ENCODE measurements at regions of chr5 and their contacts with region 1.

Region 1: DNA sequence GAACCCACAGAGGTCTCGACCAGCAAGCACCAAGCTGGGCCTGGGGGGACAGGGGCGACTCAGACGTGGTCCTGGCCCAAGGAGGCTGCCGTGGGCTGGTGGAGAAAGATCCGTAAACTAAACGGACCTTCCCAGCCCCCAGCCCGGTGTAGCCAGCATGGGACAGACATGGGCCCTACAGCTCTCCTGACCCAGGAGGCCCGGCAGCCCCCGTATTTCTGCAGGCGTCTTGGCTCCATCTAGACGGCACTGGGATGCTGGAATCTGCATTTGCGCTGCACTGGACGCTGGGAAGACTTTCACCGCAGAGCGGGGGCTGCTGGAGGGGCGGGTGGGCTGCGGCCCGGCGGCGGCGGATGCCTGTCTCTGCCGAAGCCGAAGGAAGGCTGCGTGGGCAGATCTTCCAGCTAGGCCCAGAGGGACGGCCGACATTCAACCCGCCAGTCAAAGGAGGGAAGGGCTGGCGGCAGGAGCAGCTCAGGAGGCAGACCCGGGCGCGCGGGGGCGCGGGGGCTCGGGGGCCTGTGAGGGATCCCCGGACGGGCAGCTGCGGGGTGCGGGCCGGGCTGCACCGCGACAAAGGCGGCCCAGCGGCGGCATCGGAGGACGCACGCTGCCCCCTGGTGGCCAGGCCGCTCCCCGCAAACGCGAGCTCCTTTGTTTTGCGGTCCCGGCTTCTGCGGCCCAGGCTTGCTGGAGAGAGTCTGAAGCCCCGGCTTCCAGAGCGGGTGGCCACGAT is 266.2 kb downstream of the NSG2 start:
- DNase-seq: peak; percentile 16
- H3K4me3 ChIP-seq: peak overlapping the region; percentile 9
- CTCF ChIP-seq: peak; percentile 65

Region 2: DNA sequence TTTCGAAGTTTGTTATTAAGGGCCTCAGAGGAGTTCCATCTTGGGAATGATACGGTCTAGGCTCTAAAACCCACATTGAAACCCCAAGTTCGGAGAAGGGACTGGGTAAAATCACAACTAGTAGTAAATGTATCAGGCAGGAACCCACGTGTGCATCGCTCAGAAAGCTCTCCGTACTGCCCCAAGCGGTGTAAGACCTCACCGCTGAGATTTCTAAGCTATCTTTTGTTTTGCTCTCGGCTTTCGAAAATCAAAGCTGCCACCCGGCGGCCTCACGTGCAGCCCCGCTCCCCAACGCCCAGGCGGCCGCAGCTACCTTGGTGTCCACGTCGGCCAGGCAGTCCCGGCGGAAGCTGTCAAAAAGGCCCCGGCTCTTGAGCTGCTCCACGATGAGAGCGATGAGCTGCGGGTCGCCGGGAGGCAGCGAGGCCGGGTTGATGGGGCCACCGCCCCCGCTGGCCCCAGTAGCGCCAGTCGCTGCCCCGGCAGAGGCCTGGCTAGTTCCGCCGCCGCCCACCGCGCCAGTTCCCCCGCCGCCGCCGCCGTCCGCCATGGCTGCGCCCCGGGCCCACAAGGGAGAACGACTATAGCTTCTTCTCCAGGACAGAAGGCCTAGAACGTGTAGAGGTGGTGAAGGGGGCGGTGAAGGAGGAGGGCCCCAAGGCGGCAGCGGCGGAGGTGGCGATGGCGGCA is 695.7 kb before region 1 on chr5:
- in situ Hi-C with region 1: loop called (anchors 25 kb)
- DNase-seq: peak; percentile 55
- H3K4me3 ChIP-seq: peak overlapping the region; percentile 89
- CTCF ChIP-seq: peak; percentile 75

Region 3: DNA sequence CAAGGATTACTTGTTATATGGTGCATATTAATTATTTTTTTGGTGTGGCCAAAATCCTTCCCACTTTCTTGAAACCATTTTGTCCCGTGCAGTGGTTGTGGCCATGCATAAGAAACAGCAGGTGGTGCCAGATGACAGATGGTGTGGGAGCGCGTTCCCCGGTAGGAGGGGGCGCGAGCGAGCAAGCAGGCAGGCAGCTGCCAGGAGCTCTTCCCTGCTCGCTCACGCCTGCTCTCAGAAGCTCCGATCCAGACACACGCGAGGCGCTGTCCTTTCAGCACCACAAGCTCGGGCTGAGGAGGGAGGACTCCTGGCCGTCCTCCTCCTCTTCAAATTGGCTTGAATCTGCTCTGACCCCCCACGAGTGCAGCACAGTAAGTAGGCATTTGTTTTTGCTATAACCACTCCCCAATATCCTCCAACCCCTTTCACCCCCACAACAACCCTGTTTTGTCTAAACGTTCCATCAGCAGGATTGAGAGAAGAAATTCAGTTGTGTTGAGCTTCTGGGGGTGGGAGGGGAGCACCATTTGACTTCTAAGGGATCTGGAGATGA is 266.2 kb before region 1 on chr5 and contains the start of gene NSG2:
- in situ Hi-C with region 1: loop called (anchors 25 kb)
- DNase-seq: peak; percentile 94
- H3K4me3 ChIP-seq: no peak within 1 kb of the TSS
- CTCF ChIP-seq: peak; percentile 93

Region 4: DNA sequence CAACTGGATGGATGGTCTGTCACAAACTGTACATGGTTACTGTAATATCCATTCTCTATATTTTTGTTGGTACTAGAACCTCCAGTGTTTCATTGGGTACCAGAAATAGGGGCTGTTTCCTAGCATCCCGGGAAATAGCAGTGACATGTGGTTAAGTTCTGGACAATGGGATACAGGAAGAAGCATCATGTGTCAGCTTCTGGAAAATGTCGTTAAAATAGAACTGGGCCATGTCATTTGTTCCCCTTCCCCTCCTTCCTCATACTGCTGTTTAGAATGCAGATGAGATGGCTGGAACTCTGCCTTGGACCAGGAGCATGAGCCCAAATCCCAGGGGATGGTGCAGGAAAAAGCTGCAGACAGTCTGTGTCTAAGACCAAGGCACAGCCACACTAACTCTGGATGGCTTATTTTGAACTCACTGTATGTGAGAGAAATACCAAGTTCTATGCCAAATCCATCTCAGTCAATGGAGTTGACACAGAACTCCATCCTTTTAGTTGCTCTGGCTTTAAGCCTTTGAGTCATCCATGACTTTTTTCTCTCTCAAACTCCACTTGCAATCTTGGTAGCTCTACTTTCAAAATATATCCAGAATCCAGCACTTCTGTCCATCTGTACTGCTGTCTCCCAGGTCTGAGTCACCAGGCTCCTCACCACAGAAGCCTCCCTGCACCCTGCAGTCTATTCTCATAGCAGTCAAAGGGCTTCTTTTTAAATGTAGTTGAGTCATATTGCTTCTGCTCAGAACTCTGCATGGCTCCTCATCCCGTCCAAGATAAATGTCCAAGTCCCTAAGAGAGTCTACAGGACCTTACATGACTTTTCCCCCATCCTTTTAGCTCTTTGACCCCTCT is 82.0 kb before region 1 on chr5:
- in situ Hi-C with region 1: no loop called
- DNase-seq: peak; percentile 94
- H3K4me3 ChIP-seq: no peak overlapping the region
- CTCF ChIP-seq: no peak

Region 5: GRCh38 chr5:174371595-174372128 is 60.0 kb after region 1 on chr5:
- in situ Hi-C with region 1: no loop called
- DNase-seq: no peak
- H3K4me3 ChIP-seq: no peak overlapping the region
- CTCF ChIP-seq: no peak

Measured in astrocyte of the cerebellum (primary cell).